ENCODE measurements at regions of chr5 and their contacts with region 1.

Region 1: GRCh38 chr5:1052641-1053390 is 44.2 kb downstream of the NKD2 start:
- DNase-seq: no peak
- H3K4me3 ChIP-seq: no peak overlapping the region
- H3K27ac ChIP-seq: no peak overlapping the region
- H3K4me1 ChIP-seq: no peaks in the 10 kb centered on the region
- H3K27me3 ChIP-seq: no peaks in the 10 kb centered on the region
- CTCF ChIP-seq: peak; percentile 17 to 44

Region 2: GRCh38 chr5:923281-923873 is 129.4 kb before region 1 on chr5:
- CTCF ChIA-PET with region 1: no interaction called
- dilution Hi-C with region 1: no loop called
- in situ Hi-C with region 1: no loop called
- intact Hi-C with region 1: no loop called
- DNase-seq: peak; percentile 43
- H3K4me3 ChIP-seq: no peak overlapping the region
- H3K27ac ChIP-seq: no peak overlapping the region
- H3K4me1 ChIP-seq: no peaks in the 10 kb centered on the region
- H3K27me3 ChIP-seq: peaks cover 6% of the 10 kb centered on the region
- CTCF ChIP-seq: peak; percentile 75 to 93

Region 3: DNA sequence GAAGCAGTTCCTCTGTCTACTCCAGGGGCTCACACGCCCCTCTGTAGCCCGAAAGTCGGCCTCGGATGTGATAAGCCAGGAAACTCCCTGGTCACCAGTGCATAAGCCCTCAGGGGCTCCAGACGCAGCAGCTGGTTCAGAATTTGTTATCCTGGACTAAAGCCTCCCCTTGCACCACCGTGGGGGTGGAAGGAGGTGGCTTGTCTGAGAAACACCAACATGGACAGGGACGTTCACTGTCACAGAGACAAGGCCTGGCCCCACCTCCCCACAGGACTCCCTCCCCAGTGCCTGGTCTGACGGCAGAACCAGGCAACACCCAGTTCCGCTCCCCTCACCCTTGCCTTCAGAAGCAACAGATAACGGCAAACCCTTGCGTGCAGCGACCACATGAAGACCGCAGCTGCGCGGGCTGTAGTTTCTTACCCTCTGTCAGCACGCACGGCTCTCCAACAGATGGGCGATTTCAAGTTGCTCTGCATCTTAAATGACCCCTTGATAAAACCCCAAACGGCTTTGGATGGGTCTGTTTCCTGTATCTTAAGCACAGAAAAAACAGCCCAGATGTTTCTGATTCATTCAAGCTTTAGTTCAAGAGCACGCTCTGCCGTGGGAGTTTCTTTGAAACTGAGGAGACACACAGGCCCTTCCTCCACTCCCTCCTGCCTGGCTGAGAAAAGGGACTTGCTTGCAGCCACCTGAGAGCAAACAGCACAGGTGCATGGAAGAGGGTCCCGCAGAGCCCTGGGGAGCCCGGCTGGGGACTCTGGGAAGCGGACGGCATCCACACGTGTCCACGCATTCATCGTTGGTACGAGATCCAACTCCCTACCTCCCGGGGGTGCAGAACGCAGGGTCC is 88.9 kb before region 1 on chr5:
- CTCF ChIA-PET with region 1: no interaction called
- dilution Hi-C with region 1: loop called (anchors 10 kb)
- in situ Hi-C with region 1: no loop called
- intact Hi-C with region 1: no loop called
- DNase-seq: no peak
- H3K4me3 ChIP-seq: no peak overlapping the region
- H3K27ac ChIP-seq: no peak overlapping the region
- H3K4me1 ChIP-seq: peaks cover 4% of the 10 kb centered on the region
- H3K27me3 ChIP-seq: peaks cover 14% of the 10 kb centered on the region
- CTCF ChIP-seq: no peak

Region 4: GRCh38 chr5:989961-990530 is 62.8 kb before region 1 on chr5:
- CTCF ChIA-PET with region 1: no interaction called
- dilution Hi-C with region 1: no loop called
- in situ Hi-C with region 1: no loop called
- intact Hi-C with region 1: no loop called
- DNase-seq: no peak
- H3K4me3 ChIP-seq: no peak overlapping the region
- H3K27ac ChIP-seq: no peak overlapping the region
- H3K4me1 ChIP-seq: no peaks in the 10 kb centered on the region
- H3K27me3 ChIP-seq: peaks cover 5% of the 10 kb centered on the region
- CTCF ChIP-seq: peak in 1 of 2 donors; percentile 30